ENCODE measurements at regions of chr13 and their contacts with region 1.

Region 1: GRCh38 chr13:26861941-26862340 is 101.4 kb upstream of the GPR12 start:
- DNase-seq: no peak
- ATAC-seq: no peak
- H3K4me3 ChIP-seq: no peak overlapping the region
- H3K27ac ChIP-seq: no peak overlapping the region
- H3K4me1 ChIP-seq: no peaks in the 10 kb centered on the region
- CTCF ChIP-seq: no peak
- EP300 ChIP-seq: no peak
- POLR2A ChIP-seq: no peak
- RAD21 ChIP-seq: no peak

Region 2: GRCh38 chr13:26872525-26873385 is 10.8 kb after region 1 on chr13:
- CTCF ChIA-PET with region 1: interaction called, 18 read pairs
- POLR2A ChIA-PET with region 1: no interaction called
- DNase-seq: peak; percentile 8 to 36
- ATAC-seq: peak; percentile 56 to 86; a peak in 4 of 6 replicates
- H3K4me3 ChIP-seq: no peak overlapping the region
- H3K27ac ChIP-seq: no peak overlapping the region
- H3K4me1 ChIP-seq: no peaks in the 10 kb centered on the region
- CTCF ChIP-seq: peak; percentile 40; the same call in 2 of the 3 replicates
- EP300 ChIP-seq: no peak
- POLR2A ChIP-seq: no peak
- RAD21 ChIP-seq: peak in 1 of 2 experiments; percentile 65; a peak in 2 of 5 replicates

Measured in A549 (cell line).